Activated B cell treated with CpG ODN at 0.5 μM for 24 hours (primary cell): ENCODE measurements at regions of chr16 and their contacts with region 1.

Region 1: GRCh38 chr16:12439399-12440230 is 364.1 kb downstream of the CPPED1 start:
- DNase-seq: no peak
- ATAC-seq: no peak
- H3K4me3 Mint-ChIP-seq: no peak overlapping the region
- H3K27ac Mint-ChIP-seq: peak overlapping the region; percentile 46
- H3K4me1 Mint-ChIP-seq: peaks cover 13% of the 10 kb centered on the region
- H3K27me3 Mint-ChIP-seq: no peaks in the 10 kb centered on the region
- CTCF ChIP-seq: no peak

Region 2: DNA sequence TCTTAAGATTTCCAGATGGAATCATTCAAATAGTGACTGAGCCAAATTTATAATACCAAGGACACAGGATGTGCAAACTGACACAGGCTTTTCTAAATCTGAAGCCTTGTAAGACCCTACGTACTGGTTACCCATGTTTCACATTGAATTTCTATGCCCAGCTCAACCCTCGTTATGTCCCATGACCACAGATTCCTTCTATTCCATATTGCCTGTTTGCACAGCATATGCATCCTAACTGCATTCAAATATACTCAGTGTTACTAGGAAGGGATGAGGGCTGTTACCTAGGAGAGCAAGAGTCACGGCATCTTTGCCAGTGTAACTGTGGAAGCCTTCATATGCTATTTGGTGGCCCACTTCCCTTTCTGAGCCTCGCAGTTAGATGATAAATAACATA is 767.0 kb after region 1 on chr16:
- CTCF ChIA-PET with region 1: no interaction called
- POLR2A ChIA-PET with region 1: no interaction called
- intact Hi-C with region 1: loop called (anchors 5 kb)
- DNase-seq: no peak
- ATAC-seq: no peak
- H3K4me3 Mint-ChIP-seq: no peak overlapping the region
- H3K27ac Mint-ChIP-seq: no peak overlapping the region
- H3K4me1 Mint-ChIP-seq: no peaks in the 10 kb centered on the region
- H3K27me3 Mint-ChIP-seq: no peaks in the 10 kb centered on the region
- CTCF ChIP-seq: no peak